MCF 10A (cell line): ENCODE measurements at regions of chr2 and their contacts with region 1.

Region 1: GRCh38 chr2:134466141-134466540 is 212.3 kb downstream of the MGAT5 start:
- DNase-seq: peak; percentile 53
- H3K4me3 Mint-ChIP-seq: no peak overlapping the region
- H3K27ac Mint-ChIP-seq: no peak overlapping the region
- H3K4me1 Mint-ChIP-seq: peaks cover 5% of the 10 kb centered on the region
- H3K27me3 Mint-ChIP-seq: no peaks in the 10 kb centered on the region
- CTCF ChIP-seq: peak; percentile 23

Region 2: DNA sequence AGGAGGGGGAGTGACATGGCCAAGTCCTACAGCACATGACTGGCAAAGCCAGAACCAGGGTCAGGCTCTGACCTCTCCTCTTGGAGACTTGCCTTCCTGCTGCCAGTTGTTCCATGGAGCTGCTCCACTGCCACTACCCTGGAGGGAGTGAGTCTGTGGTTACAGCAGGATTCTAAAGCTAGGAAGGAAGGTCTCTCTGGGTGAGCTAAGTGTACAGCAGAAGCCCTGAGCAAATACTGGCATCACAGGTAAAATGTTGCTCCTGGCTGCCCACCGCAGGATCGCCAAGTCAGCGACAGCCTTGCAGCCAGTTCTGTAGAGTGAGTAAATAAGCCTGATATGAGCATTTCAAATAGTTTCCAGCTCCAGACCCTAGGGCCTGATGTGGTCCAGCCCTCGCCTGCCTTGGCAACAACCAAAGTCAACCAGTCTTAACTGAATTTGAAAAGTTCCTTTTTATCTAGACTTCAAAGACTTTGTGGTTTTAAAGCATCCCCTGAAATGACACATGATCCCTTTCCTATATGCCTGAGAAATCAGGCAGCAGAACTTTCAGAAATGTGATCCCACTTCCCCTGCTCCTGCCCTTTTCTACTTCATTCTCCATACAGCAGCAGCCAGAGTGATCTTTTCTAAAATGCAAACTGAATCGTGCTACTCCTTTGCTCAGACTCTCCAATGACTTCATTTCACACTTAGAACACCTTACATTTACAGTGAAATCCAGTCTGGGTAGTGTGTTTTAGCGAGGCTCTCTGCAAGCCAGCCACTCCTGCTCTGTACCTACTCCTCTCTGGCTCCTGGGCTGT is 97.9 kb before region 1 on chr2:
- CTCF ChIA-PET with region 1: no interaction called
- POLR2A ChIA-PET with region 1: no interaction called
- intact Hi-C with region 1: no loop called
- DNase-seq: no peak
- H3K4me3 Mint-ChIP-seq: no peak overlapping the region
- H3K27ac Mint-ChIP-seq: no peak overlapping the region
- H3K4me1 Mint-ChIP-seq: peaks cover 10% of the 10 kb centered on the region
- H3K27me3 Mint-ChIP-seq: no peaks in the 10 kb centered on the region
- CTCF ChIP-seq: no peak

Region 3: GRCh38 chr2:134892282-134893070 is 426.3 kb after region 1 on chr2:
- CTCF ChIA-PET with region 1: interaction called, 41 read pairs
- POLR2A ChIA-PET with region 1: no interaction called
- intact Hi-C with region 1: no loop called
- DNase-seq: no peak
- H3K4me3 Mint-ChIP-seq: no peak overlapping the region
- H3K27ac Mint-ChIP-seq: no peak overlapping the region
- H3K4me1 Mint-ChIP-seq: no peaks in the 10 kb centered on the region
- H3K27me3 Mint-ChIP-seq: no peaks in the 10 kb centered on the region
- CTCF ChIP-seq: no peak